ENCODE measurements at regions of chr6 and their contacts with region 1.

Region 1: DNA sequence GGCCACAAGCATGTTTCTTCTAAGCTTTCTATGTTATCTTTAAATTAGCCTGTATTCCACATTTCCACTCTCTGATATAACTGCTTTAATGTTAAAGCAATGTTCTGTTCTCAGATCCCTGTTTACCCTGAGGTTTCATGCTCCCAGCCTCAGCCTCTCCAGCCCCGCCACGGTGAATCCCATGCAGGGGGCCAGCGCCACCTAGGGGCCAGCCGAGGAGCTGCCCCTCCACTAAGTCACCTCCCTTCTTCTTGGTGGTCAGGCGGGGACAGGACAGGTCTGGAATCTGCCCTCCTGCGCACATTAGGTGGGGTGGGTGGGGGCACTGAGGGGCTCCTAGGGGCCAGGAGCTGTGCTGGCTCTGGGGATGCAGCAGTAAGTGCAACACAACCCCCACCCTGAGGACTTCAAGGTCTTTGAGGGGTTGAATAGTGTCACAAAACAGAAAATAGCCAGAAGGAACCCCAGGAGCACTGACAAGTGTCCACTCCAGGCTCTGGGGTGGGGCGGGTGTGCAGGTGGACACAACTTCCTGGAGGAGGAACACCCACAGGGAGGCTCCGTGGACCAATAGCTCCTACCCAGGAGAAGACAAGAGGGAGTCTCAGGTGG is 61.6 kb downstream of the RAB44 start:
- DNase-seq: peak; percentile 90 to 95
- ATAC-seq: peak; percentile 93
- H3K4me3 ChIP-seq: no peak overlapping the region
- H3K27ac ChIP-seq: no peak overlapping the region
- H3K4me1 ChIP-seq: no peaks in the 10 kb centered on the region
- H3K27me3 ChIP-seq: no peaks in the 10 kb centered on the region

Region 2: DNA sequence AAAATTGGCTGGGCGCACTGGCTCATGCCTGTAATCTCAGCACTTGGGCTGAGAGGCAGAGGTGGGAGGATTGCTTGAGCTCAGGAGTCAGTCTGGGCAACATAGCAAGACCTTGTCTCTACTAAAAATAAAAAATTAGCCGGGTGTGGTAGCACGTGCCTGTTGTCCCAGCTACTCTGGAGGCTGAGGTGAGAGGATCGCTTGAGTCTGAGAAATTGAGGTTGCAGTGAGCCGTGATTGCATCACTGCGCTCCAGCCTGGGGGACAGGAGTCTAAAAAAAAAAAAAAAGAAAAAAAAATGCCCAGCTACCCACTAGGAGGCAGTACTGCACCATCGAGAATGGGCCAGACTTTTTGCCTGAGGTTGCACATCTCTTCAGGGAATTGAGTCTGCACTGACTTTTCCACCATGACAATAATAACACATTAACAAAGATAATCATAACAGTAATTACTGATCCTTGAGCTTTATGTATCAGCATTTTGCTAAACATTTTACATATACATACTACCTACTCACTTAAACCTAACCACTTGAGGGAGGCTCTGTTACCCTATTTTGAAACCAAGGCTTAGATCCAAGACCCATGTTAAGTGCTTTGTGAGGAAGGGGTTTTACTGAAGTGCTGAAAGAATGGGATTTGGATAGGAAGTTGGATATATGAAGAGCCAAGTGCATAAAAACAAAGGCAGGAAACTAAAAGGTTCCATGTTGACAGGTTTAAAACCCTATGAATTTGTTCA is 144.1 kb before region 1 on chr6:
- intact Hi-C with region 1: loop called in 1 of 2 experiments (anchors 2 kb)
- DNase-seq: peak in 1 of 2 donors; percentile 61
- ATAC-seq: peak; percentile 77
- H3K4me3 ChIP-seq: no peak overlapping the region
- H3K27ac ChIP-seq: no peak overlapping the region
- H3K4me1 ChIP-seq: peaks cover 0 to 1% of the 10 kb centered on the region in 2 donors
- H3K27me3 ChIP-seq: no peaks in the 10 kb centered on the region

Region 3: GRCh38 chr6:36623547-36624459 is 135.5 kb before region 1 on chr6:
- intact Hi-C with region 1: loop called (anchors 2 kb)
- DNase-seq: peak; percentile 87 to 94
- ATAC-seq: peak; percentile 75
- H3K4me3 ChIP-seq: no peak overlapping the region
- H3K27ac ChIP-seq: no peak overlapping the region
- H3K4me1 ChIP-seq: peaks cover 0 to 4% of the 10 kb centered on the region in 2 donors
- H3K27me3 ChIP-seq: no peaks in the 10 kb centered on the region

Region 4: GRCh38 chr6:36692220-36692619 is 67.0 kb before region 1 on chr6:
- intact Hi-C with region 1: loop called in 1 of 2 experiments (anchors 5 kb)
- DNase-seq: no peak
- ATAC-seq: no peak
- H3K4me3 ChIP-seq: no peak overlapping the region
- H3K27ac ChIP-seq: no peak overlapping the region
- H3K4me1 ChIP-seq: no peaks in the 10 kb centered on the region
- H3K27me3 ChIP-seq: no peaks in the 10 kb centered on the region

Region 5: GRCh38 chr6:36724514-36725390 is 34.5 kb before region 1 on chr6:
- intact Hi-C with region 1: loop called in 1 of 2 experiments (anchors 2 kb)
- DNase-seq: peak; percentile 79 to 89
- ATAC-seq: no peak
- H3K4me3 ChIP-seq: no peak overlapping the region
- H3K27ac ChIP-seq: no peak overlapping the region
- H3K4me1 ChIP-seq: no peaks in the 10 kb centered on the region
- H3K27me3 ChIP-seq: no peaks in the 10 kb centered on the region

Region 6: DNA sequence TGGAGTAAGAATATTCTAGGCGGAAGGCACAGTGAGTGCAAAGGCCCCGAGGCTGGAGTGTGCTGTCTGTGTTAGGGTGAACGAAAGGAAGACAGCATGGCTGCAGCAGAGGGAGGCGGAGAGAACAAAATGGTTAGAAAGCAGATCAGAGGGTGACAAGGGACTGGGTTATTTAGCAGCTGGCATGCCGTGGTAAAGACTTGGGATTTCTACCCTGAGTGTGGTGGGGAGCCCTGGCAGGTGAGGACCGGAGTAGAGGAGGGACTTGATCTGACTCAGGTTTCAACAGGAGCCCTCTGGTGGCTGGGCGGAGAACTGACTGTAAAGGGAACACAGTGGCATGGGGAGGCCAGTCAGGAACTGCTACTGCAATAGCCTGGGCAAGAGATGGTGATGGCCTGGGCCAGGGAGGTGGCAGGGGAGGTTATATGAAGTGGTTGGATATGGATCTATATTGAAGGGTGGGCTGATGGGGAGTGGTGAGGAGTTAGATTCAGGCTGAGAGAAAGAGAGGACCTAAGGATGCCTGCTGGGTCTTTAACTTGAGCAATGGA is 448.7 kb after region 1 on chr6:
- intact Hi-C with region 1: loop called in 1 of 2 experiments (anchors 5 kb)
- DNase-seq: peak; percentile 91 to 92
- ATAC-seq: peak; percentile 69
- H3K4me3 ChIP-seq: no peak overlapping the region
- H3K27ac ChIP-seq: no peak overlapping the region
- H3K4me1 ChIP-seq: no peaks in the 10 kb centered on the region
- H3K27me3 ChIP-seq: no peaks in the 10 kb centered on the region

Region 7: DNA sequence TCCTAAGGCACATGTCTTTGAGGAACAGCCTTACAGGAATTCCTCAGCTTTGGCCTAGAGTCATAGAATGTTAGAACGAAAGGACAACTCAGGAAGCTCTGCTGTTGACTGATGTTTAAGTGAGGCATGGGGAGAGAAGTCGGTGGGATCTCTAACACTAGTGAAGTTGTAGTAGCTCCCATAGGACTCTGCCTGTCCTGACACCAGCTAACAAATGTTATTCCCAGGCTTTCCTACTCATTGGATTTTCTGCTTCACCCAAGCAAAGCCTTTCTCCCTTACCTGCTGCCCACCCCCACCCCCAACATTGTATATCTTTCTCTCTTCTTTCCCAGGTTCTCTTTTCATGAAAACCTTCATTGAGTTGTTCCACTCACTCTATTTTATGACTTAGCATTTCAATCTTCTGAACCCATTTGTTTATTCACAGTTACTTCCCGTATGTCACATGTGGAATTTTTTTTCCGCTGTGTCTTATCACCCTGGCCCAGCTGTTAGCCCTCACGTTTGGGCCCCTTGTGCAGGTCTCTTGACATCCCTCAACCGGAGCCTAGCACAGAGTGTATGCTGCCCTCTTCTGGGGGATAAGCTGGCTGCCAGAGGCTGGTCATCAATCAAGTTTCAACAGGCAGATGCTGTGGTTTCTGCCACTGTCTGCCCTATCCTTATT is 555.4 kb after region 1 on chr6:
- intact Hi-C with region 1: no loop called
- DNase-seq: no peak
- ATAC-seq: no peak
- H3K4me3 ChIP-seq: no peak overlapping the region
- H3K27ac ChIP-seq: no peak overlapping the region
- H3K4me1 ChIP-seq: no peaks in the 10 kb centered on the region
- H3K27me3 ChIP-seq: no peaks in the 10 kb centered on the region

Measured in aorta (tissue), 5 donors.